HEK293 (cell line): ENCODE measurements at regions of chr3 and their contacts with region 1.

Region 1: GRCh38 chr3:29079358-29079757 is 201.5 kb upstream of the RBMS3 start:
- H3K4me3 ChIP-seq: no peak overlapping the region
- H3K27ac ChIP-seq: no peak overlapping the region
- H3K4me1 ChIP-seq: no peaks in the 10 kb centered on the region
- CTCF ChIP-seq: no peak

Region 2: DNA sequence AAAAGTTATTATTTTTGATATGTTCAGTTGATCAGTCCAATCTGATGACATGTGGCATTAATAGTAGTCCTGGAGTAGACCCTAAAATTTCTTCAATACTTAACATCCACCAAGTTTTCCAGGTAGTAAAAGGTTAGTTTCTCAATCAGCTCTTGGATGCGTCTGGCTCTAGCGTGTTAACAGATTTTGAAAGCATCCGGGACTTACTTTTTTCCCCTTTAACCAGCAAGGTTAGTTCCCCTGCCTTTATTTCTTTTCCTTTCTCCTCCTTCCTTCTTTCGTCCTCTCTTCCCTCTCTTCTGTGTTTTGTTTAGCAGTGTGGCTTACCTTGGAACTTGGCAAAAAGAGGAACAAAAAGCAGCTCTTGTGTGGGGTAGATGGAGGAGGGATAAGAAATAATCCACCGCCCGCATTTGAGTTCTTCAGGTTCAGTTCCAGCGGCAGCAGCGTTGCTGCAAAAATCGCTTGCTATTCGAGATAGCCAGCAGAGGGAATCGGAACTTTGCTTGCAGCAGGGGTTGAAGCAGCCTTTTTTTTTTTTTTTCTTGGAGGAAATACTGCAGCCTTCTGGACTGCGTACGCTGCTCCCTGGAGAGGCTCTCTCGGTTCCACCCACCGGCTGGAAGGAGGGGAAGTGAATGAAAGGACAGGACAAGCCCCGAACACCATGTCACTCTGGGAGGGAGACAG is 201.2 kb after region 1 on chr3 and contains the start of gene RBMS3:
- CTCF ChIA-PET with region 1: interaction called, 10 read pairs
- POLR2A ChIA-PET with region 1: no interaction called
- H3K4me3 ChIP-seq: peak within 1 kb of the TSS; percentile 59
- H3K27ac ChIP-seq: peak within 1 kb of the TSS; percentile 76
- H3K4me1 ChIP-seq: 0 out of 2 replicates have a peak, but pooled peaks cover 4% of the 10 kb centered on the region
- CTCF ChIP-seq: peak; percentile 54; the same call in 1 of the 2 replicates